ENCODE measurements at regions of chr14 and their contacts with region 1.

Region 1: GRCh38 chr14:29521526-29522137 is 406.0 kb downstream of the PRKD1 start:
- DNase-seq: peak; percentile 21 to 56
- H3K4me3 ChIP-seq: no peak overlapping the region
- H3K27ac ChIP-seq: no peak overlapping the region
- H3K4me1 ChIP-seq: no peaks in the 10 kb centered on the region
- H3K27me3 ChIP-seq: no peaks in the 10 kb centered on the region
- CTCF ChIP-seq: peak; percentile 52 to 82 (median 67)
- EP300 ChIP-seq: no peak
- POLR2A ChIP-seq: no peak
- RAD21 ChIP-seq: peak; percentile 86 to 89

Region 2: DNA sequence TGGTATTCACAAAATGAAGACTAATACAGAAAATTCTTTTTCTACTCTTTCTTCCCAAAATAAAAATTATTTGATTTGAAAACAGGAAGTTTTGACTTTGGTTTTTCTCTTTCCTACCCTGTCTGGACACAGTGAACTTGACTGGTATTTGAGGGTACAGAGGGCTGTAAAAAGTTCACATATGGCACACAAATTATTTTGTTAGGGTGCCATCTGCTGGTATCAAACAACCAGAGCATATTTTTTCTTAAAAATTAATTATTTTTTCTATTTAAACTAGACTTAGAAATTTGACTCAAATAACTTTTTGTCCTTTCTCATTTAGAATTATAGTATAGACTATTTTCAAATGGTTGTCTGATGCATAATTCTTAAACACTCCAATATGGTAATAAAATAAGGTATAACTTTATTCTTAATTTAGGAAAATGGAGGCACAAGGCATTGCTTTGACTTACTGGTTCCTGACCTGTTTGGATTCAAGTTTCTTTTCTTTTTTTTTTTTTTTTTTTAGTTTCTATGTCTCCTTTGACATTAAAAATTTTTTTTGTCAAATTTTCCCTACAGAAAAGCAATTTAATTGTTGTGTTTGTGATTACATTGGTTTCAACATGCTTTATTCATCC is 15.4 kb after region 1 on chr14:
- CTCF ChIA-PET with region 1: interaction called, 12 read pairs
- POLR2A ChIA-PET with region 1: no interaction called
- DNase-seq: no peak
- H3K4me3 ChIP-seq: no peak overlapping the region
- H3K27ac ChIP-seq: no peak overlapping the region
- H3K4me1 ChIP-seq: no peaks in the 10 kb centered on the region
- H3K27me3 ChIP-seq: no peaks in the 10 kb centered on the region
- CTCF ChIP-seq: peak in 1 of 3 experiments; percentile 10; a peak in 1 of 4 replicates
- EP300 ChIP-seq: no peak
- POLR2A ChIP-seq: no peak
- RAD21 ChIP-seq: peak; percentile 25 to 28

Region 3: DNA sequence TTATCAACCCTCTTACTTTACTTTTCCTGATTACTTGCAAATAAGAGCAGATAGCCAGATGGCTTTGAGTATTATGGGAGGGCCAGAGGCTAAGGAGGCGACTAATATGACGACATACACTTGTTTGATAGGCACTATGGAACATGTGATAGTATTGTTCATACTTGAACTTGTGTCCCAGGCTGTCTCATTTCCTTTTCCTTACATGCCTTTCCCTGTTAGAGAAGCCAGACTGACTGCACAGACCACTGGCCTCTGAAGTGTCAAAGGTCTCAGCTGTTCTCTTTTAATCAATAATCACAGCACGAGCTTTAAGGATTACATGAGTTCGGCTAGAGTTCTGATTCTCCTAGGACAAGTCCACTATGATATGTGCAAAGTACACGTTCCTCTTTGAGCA is 80.0 kb after region 1 on chr14:
- CTCF ChIA-PET with region 1: no interaction called
- POLR2A ChIA-PET with region 1: no interaction called
- DNase-seq: no peak
- H3K4me3 ChIP-seq: no peak overlapping the region
- H3K27ac ChIP-seq: no peak overlapping the region
- H3K4me1 ChIP-seq: no peaks in the 10 kb centered on the region
- H3K27me3 ChIP-seq: no peaks in the 10 kb centered on the region
- CTCF ChIP-seq: no peak
- EP300 ChIP-seq: no peak
- POLR2A ChIP-seq: no peak
- RAD21 ChIP-seq: no peak

Measured in H1 (cell line).